IMR-90 (cell line): ENCODE measurements at regions of chr6 and their contacts with region 1.

Region 1: DNA sequence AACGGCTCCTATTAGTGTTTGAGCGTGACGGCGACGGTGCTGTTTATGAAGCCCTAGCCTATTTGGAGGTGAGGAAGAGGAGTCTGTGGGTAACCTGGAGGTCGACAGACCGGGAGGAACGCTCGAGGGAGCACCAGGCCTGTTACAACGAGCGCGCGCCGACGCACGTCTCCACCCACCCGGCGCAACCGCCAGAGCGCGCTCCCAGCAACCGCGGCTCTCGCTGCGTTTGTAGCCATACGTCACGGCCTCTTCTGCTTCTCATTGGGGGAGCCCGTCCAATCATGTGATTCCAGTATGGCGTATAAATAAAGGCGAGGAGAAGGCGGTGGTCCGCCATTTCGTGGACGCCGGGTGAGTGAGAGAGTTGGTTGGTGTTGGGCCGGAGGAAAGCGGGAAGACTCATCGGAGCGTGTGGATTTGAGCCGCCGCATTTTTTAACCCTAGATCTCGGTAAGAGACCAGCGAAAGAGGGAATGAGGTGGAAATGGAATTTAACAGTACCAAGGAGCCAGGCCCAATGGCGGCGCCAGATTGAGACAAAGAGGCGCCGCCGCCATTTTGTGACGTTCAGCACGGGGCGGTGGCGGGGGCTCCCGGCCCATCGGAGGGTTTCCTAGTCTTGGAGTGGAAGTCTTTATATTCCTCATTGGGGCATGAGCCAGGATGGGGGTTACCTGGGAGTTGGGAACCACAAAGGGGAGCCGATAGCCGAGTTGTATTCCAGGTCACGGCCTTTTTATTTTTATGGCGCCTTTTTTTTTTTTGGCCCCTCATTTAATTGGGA is at the start of gene SRSF3:
- DNase-seq: peak; percentile 98
- ATAC-seq: peak; percentile 91
- H3K4me3 ChIP-seq: peak within 1 kb of the TSS; percentile 72
- H3K27ac ChIP-seq: peak within 1 kb of the TSS; percentile 95
- H3K4me1 ChIP-seq: peaks cover 5% of the 10 kb centered on the region; the same call in 1 of the 2 replicates
- H3K27me3 ChIP-seq: no peaks in the 10 kb centered on the region
- CTCF ChIP-seq: peak; percentile 43
- POLR2A ChIP-seq: peak; percentile 100
- RAD21 ChIP-seq: 0 out of 2 replicates have a peak, but pooled peaks have one; percentile 25
- total RNA-seq, gene SRSF3: 237 and 256 TPM in 2 replicates

Region 2: DNA sequence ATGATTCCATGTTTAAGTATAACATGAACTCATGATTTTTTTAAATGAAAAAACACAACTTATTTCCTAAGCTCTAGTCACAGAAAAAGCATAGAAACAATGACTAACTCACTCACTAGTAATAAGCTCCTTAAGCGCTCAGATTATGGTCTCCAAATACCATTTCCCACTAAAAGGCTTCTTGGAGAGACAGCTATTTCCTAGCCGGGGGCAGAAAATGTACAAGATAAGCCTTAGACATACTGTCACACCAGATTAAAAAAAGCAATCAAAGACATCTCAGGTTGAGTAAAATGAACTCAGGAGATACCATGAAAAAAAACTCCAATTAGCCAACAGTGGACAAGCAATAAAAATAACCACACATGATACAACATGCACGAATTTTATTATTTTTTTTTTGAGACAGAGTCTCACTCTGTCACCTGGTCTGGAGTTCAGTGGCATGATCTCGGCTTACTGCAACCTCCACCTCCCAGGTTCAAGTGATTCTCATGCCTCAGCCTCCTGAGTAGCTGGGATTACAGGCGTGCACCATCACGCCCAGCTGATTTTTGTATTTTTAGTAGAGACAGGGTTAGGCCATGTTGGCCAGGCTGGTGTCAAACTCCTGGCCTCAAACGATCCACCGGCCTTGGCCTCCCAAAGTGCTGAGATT is 688.3 kb before region 1 on chr6:
- CTCF ChIA-PET with region 1: no interaction called
- POLR2A ChIA-PET with region 1: no interaction called
- dilution Hi-C with region 1: no loop called
- in situ Hi-C with region 1: no loop called
- intact Hi-C with region 1: no loop called
- DNase-seq: peak; percentile 35
- ATAC-seq: no peak
- H3K4me3 ChIP-seq: no peak overlapping the region
- H3K27ac ChIP-seq: no peak overlapping the region
- H3K4me1 ChIP-seq: peaks cover 5% of the 10 kb centered on the region
- H3K27me3 ChIP-seq: no peaks in the 10 kb centered on the region
- CTCF ChIP-seq: no peak
- POLR2A ChIP-seq: no peak
- RAD21 ChIP-seq: no peak

Region 3: DNA sequence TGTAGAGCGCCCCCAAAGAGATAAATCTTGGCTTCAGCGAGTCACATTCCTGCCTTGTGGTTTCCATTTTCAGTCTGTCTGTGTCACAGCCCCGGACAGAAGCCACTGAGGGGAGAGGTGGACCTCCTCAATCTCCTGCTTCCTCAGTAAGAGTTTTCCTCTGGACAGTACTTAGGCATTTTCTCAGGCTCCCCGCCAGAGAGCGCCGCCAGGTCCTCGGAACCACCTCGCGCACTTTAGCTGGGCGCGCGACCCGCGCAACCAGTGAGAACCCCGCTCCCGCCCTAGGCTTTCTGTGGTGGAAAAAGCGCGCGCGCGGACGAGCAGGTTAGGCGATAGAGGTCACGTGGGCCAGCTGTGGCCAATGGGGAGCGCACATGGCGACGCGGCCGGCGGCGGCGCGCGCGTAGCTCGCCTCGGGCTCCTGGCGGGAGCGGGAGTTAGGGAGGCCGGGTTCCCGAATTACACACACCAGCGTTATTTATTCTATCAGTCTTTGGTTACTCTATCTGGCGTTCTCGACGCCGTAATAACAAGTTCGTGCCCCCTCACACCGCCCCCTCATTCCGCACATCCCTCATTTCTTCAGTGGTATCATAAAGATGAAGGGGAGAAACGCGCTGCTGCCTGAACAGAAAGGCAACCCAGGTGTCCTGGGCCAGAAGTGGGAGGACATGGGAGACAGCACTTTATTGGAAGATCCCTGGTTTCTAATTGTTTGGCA is 171.0 kb before region 1 on chr6:
- CTCF ChIA-PET with region 1: no interaction called
- POLR2A ChIA-PET with region 1: interaction called, 5 read pairs
- dilution Hi-C with region 1: no loop called
- in situ Hi-C with region 1: no loop called
- intact Hi-C with region 1: loop called (anchors 5 kb)
- DNase-seq: peak; percentile 97
- ATAC-seq: peak; percentile 98
- H3K4me3 ChIP-seq: peak overlapping the region; percentile 66
- H3K27ac ChIP-seq: peak overlapping the region; percentile 55; the same call in 1 of the 2 replicates
- H3K4me1 ChIP-seq: peaks cover 2% of the 10 kb centered on the region
- H3K27me3 ChIP-seq: no peaks in the 10 kb centered on the region
- CTCF ChIP-seq: peak; percentile 75
- POLR2A ChIP-seq: peak; percentile 30; the same call in 1 of the 2 replicates
- RAD21 ChIP-seq: peak; percentile 79

Region 4: DNA sequence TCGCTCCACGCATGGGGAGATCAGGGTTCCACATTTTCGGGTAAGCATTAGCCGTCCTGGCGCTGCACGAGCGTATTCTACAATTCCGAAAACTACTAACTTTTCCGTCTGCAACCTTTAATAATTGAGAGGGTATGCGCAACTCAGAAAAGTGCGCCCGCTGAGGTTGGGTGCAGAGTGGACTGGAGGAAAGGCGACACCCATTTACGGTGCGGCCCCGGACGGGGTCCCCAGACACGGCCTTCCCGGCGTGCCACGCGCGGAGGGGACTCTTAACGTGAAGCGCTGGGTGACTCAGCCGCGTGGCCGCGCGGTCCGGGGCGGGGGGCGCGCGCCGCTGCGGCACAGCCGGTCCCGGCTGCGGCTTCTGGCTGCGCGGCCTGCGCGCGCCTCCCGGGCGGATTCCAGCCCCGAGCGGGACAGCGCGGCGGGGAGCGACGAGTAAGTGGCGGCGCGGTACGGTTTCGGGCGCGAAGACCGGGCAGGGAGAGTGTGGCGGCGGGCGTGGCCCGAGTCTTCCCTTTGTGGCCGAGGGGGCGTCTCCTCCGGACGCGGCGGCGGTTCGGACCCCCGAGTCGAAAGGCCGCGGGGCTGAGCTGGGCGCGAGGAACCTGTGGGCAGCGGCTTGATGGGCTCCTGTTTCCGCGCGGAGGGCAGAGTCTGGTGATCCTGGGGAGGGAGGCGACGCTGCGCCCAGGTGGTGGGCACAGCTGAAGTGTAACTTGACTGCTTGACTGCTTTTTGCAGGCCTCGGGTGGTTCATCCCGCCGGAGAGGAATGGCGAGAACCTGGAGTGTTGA is 151.4 kb before region 1 on chr6 and contains the starts of genes KCTD20 and PXT1:
- CTCF ChIA-PET with region 1: interaction called, 4 read pairs
- POLR2A ChIA-PET with region 1: no interaction called
- dilution Hi-C with region 1: no loop called
- in situ Hi-C with region 1: no loop called
- intact Hi-C with region 1: loop called (anchors 2 kb)
- DNase-seq: peak; percentile 88
- ATAC-seq: peak; percentile 81
- H3K4me3 ChIP-seq: peak within 1 kb of the TSS; percentile 89
- H3K27ac ChIP-seq: peak within 1 kb of the TSS; percentile 97
- H3K4me1 ChIP-seq: peaks cover 6% of the 10 kb centered on the region
- H3K27me3 ChIP-seq: no peaks in the 10 kb centered on the region
- CTCF ChIP-seq: no peak
- POLR2A ChIP-seq: peak; percentile 91
- RAD21 ChIP-seq: peak; percentile 7; the same call in 1 of the 2 replicates
- total RNA-seq, gene KCTD20: 150 TPM in 2 replicates
- total RNA-seq, gene PXT1: not detected in 2 replicates

Region 5: DNA sequence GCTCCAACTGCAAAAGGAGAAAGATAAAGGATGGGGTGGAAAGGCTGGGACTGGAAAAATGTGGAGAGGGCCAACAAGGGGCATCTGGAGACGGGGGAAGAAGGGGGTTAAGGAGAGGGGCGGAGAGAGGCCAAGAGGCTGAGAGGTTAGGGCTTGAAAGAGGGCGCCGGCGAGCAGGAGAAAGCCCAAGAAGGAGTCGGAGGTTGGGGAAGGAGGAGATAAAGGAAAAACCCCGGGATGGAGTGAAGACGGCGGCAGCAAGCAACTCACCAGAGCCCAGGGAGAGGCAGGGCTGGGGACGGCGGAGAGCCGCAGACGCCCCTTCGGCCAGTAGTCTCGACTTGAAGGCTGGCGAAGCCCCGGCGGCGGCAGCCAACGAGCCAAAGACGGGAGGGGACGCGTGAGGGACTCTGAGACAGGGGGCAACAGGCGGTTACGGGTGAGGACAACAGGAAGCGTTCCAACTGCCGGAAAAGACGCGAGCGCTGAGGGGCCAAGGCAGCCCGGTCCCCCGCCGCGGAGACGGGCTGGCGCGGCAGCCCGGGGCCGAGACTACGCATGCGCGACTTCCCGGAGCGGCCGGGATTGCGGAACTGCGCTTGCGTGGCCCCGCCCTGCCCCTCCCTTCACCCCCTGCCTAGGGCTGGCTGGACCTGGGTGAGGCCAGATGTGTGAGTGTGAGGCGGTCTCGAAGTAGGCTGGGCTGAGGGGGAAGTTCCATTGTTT is 47.1 kb before region 1 on chr6 and contains the start of gene STK38:
- CTCF ChIA-PET with region 1: no interaction called
- POLR2A ChIA-PET with region 1: interaction called, 10 read pairs
- dilution Hi-C with region 1: no loop called
- in situ Hi-C with region 1: loop called (anchors 5 kb)
- intact Hi-C with region 1: loop called (anchors 1 kb)
- DNase-seq: peak; percentile 82
- ATAC-seq: peak; percentile 95
- H3K4me3 ChIP-seq: peak within 1 kb of the TSS; percentile 97
- H3K27ac ChIP-seq: peak within 1 kb of the TSS; percentile 98
- H3K4me1 ChIP-seq: peaks cover 6% of the 10 kb centered on the region; the same call in 1 of the 2 replicates
- H3K27me3 ChIP-seq: no peaks in the 10 kb centered on the region
- CTCF ChIP-seq: no peak
- POLR2A ChIP-seq: peak; percentile 58
- RAD21 ChIP-seq: no peak
- total RNA-seq, gene STK38: 9.7 and 10.6 TPM in 2 replicates

Region 6: GRCh38 chr6:36666726-36667591 is 72.7 kb after region 1 on chr6:
- CTCF ChIA-PET with region 1: no interaction called
- POLR2A ChIA-PET with region 1: interaction called, 10 read pairs
- dilution Hi-C with region 1: no loop called
- in situ Hi-C with region 1: no loop called
- intact Hi-C with region 1: no loop called
- DNase-seq: peak; percentile 96
- ATAC-seq: peak; percentile 96
- H3K4me3 ChIP-seq: no peak overlapping the region
- H3K27ac ChIP-seq: peak overlapping the region; percentile 95
- H3K4me1 ChIP-seq: peaks cover 13% of the 10 kb centered on the region
- H3K27me3 ChIP-seq: no peaks in the 10 kb centered on the region
- CTCF ChIP-seq: no peak
- POLR2A ChIP-seq: no peak; the same call in 1 of the 2 replicates
- RAD21 ChIP-seq: peak; percentile 27